Transverse colon (tissue), 4 donors: ENCODE measurements at regions of chrX and their contacts with region 1.

Region 1: GRCh38 chrX:150772150-150772970 is 79.2 kb downstream of the MTMR1 start:
- DNase-seq: peak; percentile 82
- H3K4me3 ChIP-seq: no peak overlapping the region
- H3K27ac ChIP-seq: no peak overlapping the region
- H3K4me1 ChIP-seq: no peaks in the 10 kb centered on the region
- H3K27me3 ChIP-seq: no peaks in the 10 kb centered on the region
- CTCF ChIP-seq: peak; percentile 69 to 85 (median 73)
- EP300 ChIP-seq: no peak
- POLR2A ChIP-seq: no peak

Region 2: DNA sequence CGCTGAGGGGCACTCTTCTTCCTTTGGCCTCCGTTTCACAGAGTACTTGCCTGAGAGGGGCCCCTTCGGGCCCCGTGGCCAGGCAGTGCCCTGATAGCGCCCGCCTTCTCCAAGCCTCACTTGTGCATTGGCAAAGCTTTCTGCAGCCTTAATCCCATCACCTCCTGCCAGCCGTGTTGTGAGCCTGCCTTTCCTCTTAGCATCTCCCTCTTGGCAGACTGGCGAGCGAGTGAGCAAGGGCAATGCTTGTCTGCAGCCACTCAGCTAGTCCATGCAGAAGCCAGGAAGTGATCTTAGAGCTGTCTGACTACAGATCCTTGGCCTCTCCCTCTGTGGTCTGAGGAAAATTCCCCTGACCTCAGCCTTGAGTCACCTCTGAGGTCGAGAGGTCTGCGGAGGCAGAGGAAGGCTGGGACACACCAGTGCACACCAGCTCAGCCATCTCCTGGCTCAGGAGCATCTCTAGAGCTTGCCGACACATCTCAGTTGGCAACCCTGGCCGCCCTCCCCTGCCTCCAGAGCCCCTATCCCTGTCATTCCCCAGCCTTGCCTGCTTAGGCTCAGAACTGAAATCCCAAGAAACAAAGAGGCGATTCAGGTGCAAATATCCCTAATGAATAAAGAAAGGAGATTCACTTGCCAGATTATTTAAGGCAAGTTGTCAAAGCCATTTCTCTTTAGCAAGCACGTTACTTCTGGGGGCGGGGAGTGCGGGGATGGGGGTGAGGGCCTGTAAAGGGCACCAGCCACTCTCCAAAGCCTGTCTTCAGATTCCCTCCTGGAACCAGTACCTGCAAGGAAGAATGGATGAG is 552.8 kb before region 1 on chrX:
- in situ Hi-C with region 1: no loop called
- intact Hi-C with region 1: no loop called
- DNase-seq: no peak
- H3K4me3 ChIP-seq: no peak overlapping the region
- H3K27ac ChIP-seq: no peak overlapping the region
- H3K4me1 ChIP-seq: no peaks in the 10 kb centered on the region
- H3K27me3 ChIP-seq: no peaks in the 10 kb centered on the region
- CTCF ChIP-seq: no peak
- EP300 ChIP-seq: no peak
- POLR2A ChIP-seq: no peak

Region 3: GRCh38 chrX:150752124-150752523 is 20.2 kb before region 1 on chrX:
- in situ Hi-C with region 1: no loop called
- intact Hi-C with region 1: no loop called
- DNase-seq: no peak
- H3K4me3 ChIP-seq: no peak overlapping the region
- H3K27ac ChIP-seq: no peak overlapping the region
- H3K4me1 ChIP-seq: no peaks in the 10 kb centered on the region
- H3K27me3 ChIP-seq: no peaks in the 10 kb centered on the region
- CTCF ChIP-seq: no peak
- EP300 ChIP-seq: no peak
- POLR2A ChIP-seq: no peak

Region 4: GRCh38 chrX:150982788-150983520 is 210.6 kb after region 1 on chrX and contains the start of gene HMGB3:
- in situ Hi-C with region 1: loop called in 1 of 4 experiments (anchors 25 kb)
- intact Hi-C with region 1: no loop called
- DNase-seq: peak; percentile 88
- H3K4me3 ChIP-seq: peak within 1 kb of the TSS; percentile 31 to 62 (median 56)
- H3K27ac ChIP-seq: peak within 1 kb of the TSS; percentile 77 to 89 (median 86)
- H3K4me1 ChIP-seq: peaks cover 0 to 10% (median 0%) of the 10 kb centered on the region in 4 donors
- H3K27me3 ChIP-seq: no peaks in the 10 kb centered on the region
- CTCF ChIP-seq: no peak
- EP300 ChIP-seq: no peak
- POLR2A ChIP-seq: peak; percentile 47
- total RNA-seq, gene HMGB3: 2.6 to 23.2 (median 8.6) TPM

Region 5: GRCh38 chrX:150990890-150991289 is 218.5 kb after region 1 on chrX:
- in situ Hi-C with region 1: loop called in 2 of 4 experiments (anchors 10 to 25 kb)
- intact Hi-C with region 1: no loop called
- DNase-seq: no peak
- H3K4me3 ChIP-seq: no peak overlapping the region
- H3K27ac ChIP-seq: no peak overlapping the region
- H3K4me1 ChIP-seq: no peaks in the 10 kb centered on the region
- H3K27me3 ChIP-seq: no peaks in the 10 kb centered on the region
- CTCF ChIP-seq: no peak
- EP300 ChIP-seq: no peak
- POLR2A ChIP-seq: no peak

Region 6: DNA sequence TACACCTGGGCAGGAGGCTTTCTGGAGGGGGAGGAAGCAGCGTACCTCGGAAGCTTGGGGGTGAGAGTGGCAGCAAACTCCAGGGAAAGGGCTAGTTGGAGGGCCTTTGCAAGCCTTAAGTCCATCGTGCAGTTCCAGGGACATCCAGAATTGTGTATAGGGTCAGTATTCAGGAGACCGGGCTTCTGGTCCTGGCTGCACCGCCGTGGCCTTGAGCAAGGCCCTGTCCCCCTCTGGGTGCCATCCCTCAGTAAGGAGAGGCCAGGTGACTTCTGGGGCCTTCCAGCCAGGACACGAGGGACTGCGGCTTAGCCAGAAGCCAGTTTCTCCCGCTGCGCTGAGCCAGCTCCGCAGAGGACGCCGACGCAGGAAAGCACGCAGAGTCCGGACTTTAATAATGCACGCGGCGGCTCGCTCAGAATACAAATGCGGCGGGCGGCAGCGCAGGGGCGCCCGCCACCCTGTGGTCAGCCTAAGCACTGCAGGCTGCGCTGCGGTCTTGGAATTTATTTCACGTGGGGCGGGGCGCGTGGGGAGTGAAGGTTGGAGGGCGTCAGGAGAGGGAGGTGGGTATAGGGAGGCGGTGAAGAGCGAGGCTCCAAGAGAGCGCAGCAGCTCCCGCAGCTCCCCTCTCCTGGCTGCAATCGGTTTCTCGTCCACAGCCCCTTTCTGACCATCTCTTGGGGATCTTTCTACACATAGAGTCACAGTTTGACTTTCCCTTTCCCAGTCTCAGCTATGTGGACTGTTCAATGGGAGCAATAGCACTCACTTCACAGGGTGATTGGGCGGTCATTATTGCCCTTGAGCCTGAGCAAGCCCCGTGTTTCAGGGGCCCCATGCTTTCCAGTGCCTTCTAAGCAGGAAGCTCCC is 310.0 kb after region 1 on chrX:
- in situ Hi-C with region 1: loop called (anchors 10 to 25 kb)
- intact Hi-C with region 1: loop called (anchors 2 kb)
- DNase-seq: peak; percentile 53
- H3K4me3 ChIP-seq: no peak overlapping the region
- H3K27ac ChIP-seq: no peak overlapping the region
- H3K4me1 ChIP-seq: peaks cover 0 to 7% (median 1%) of the 10 kb centered on the region in 4 donors
- H3K27me3 ChIP-seq: no peaks in the 10 kb centered on the region
- CTCF ChIP-seq: peak; percentile 87 to 90 (median 87)
- EP300 ChIP-seq: no peak
- POLR2A ChIP-seq: no peak